Psoas muscle (tissue), 8 donors: ENCODE measurements at regions of chr16 and their contacts with region 1.

Region 1: GRCh38 chr16:67659648-67660563 is at the start of gene ACD:
- DNase-seq: peak; percentile 92 to 95
- ATAC-seq: peak; percentile 92 to 96 (median 94)
- H3K4me3 ChIP-seq: peak within 1 kb of the TSS; percentile 91
- H3K27ac ChIP-seq: peak within 1 kb of the TSS; percentile 87
- H3K4me1 ChIP-seq: peaks cover 16% of the 10 kb centered on the region
- H3K27me3 ChIP-seq: peaks cover 0 to 2% (median under 1%) of the 10 kb centered on the region in 3 donors
- CTCF ChIP-seq: no peak
- total RNA-seq, gene ACD: 4.9 to 10.2 (median 7.4) TPM

Region 2: GRCh38 chr16:67561824-67562525 is 97.9 kb before region 1 on chr16:
- intact Hi-C with region 1: loop called in 1 of 2 experiments (anchors 5 kb)
- DNase-seq: peak; percentile 96 to 98
- ATAC-seq: peak; percentile 81 to 90 (median 84)
- H3K4me3 ChIP-seq: peak overlapping the region; percentile 78
- H3K27ac ChIP-seq: peak overlapping the region; percentile 96
- H3K4me1 ChIP-seq: peaks cover 31% of the 10 kb centered on the region
- H3K27me3 ChIP-seq: no peaks in the 10 kb centered on the region
- CTCF ChIP-seq: no peak

Region 3: DNA sequence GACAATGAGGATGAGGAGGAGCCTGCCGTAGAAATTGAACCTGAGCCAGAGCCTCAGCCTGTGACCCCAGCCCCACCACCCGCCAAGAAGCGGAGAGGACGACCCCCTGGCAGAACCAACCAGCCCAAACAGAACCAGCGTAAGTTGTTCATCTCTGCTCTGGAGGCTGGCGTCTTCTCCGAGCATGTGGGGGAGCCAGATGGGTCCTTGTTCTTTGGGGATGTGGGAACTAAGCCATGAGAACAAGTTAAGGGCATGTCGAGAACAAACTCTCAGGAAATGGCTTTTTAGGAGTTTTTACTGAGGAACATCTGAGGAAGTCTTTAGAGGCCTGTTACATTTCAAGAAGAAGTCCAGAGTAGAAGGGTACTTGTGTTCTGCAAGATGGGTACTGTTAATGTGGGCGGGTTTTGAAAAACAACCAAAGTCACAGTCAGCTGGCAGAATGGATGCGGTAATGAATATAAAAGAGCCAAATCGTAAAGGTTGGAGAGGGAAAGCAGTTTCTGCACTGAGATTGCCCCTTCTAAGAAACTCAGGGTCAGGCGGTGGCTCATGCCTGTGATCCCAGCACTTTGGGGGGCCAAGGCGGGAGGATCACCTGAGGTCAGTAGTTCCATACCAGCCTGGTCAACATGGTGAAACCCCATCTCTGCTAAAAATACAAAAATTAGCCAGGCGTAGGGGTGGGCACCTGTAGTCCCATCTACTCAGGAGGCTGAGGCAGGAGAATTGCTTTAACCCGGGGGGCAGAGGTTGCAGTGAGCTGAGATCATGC is 23.0 kb before region 1 on chr16:
- intact Hi-C with region 1: loop called in 1 of 2 experiments (anchors 2 kb)
- DNase-seq: no peak
- ATAC-seq: no peak
- H3K4me3 ChIP-seq: no peak overlapping the region
- H3K27ac ChIP-seq: no peak overlapping the region
- H3K4me1 ChIP-seq: peaks cover 16% of the 10 kb centered on the region
- H3K27me3 ChIP-seq: no peaks in the 10 kb centered on the region
- CTCF ChIP-seq: no peak